Endothelial cell of umbilical vein (primary cell): ENCODE measurements at regions of chr1 and their contacts with region 1.

Region 1: GRCh38 chr1:205255941-205256780 is 28.4 kb downstream of the TMCC2 start:
- DNase-seq: peak; percentile 83
- H3K4me3 ChIP-seq: no peak overlapping the region
- H3K27ac ChIP-seq: no peak overlapping the region
- H3K4me1 ChIP-seq: peaks cover 3% of the 10 kb centered on the region
- H3K27me3 ChIP-seq: no peaks in the 10 kb centered on the region
- CTCF ChIP-seq: peak; percentile 79 to 92
- POLR2A ChIP-seq: no peak

Region 2: DNA sequence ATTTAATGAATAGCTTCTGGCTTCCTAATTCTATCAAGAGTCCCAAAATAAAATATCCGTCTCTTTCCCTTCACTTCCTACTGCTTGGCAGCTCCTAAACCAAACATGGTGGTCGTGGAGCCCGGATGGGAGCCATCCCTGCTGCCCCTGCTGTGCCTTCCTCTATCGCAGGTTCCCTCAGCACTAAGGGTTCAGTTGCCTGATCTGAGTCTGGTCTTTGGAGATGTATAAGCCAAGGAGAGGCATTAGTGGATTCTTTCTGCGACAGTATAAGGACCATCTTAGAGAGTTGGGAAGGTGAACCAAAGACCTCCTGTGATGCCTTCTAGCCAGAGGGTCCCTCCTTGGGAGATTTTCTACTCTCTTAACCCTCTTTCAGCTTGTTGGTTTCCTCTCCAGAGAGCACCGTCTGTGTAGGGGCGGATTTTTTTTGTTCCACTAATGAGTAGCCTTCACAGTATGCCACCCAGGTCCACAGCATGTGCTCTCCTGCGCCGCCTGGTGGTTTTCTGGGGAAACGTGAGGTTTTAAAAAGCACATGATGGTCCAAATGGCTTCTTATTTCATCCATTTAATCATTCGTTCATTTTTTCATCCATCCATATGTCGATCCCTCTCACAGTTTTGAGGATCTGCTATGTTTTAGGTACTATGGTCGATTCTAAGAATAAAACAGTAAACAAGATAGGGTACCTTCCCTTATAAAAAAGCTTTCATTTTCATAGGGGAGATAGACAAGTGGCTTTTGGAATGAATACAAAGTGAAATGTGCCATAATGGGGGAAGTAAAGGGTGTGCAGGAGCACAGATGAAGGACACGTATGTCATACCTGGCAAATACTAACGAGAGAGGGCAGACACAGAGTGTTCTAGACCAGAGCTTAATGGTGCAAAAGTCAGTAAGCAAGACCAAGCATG is 314.5 kb before region 1 on chr1:
- CTCF ChIA-PET with region 1: interaction called, 7 read pairs
- POLR2A ChIA-PET with region 1: no interaction called
- dilution Hi-C with region 1: no loop called
- intact Hi-C with region 1: loop called (anchors 1 kb)
- DNase-seq: peak; percentile 63
- H3K4me3 ChIP-seq: no peak overlapping the region
- H3K27ac ChIP-seq: no peak overlapping the region
- H3K4me1 ChIP-seq: no peaks in the 10 kb centered on the region
- H3K27me3 ChIP-seq: peaks cover 5 to 10% of the 10 kb centered on the region in 2 experiments
- CTCF ChIP-seq: peak; percentile 78 to 86
- POLR2A ChIP-seq: no peak

Region 3: DNA sequence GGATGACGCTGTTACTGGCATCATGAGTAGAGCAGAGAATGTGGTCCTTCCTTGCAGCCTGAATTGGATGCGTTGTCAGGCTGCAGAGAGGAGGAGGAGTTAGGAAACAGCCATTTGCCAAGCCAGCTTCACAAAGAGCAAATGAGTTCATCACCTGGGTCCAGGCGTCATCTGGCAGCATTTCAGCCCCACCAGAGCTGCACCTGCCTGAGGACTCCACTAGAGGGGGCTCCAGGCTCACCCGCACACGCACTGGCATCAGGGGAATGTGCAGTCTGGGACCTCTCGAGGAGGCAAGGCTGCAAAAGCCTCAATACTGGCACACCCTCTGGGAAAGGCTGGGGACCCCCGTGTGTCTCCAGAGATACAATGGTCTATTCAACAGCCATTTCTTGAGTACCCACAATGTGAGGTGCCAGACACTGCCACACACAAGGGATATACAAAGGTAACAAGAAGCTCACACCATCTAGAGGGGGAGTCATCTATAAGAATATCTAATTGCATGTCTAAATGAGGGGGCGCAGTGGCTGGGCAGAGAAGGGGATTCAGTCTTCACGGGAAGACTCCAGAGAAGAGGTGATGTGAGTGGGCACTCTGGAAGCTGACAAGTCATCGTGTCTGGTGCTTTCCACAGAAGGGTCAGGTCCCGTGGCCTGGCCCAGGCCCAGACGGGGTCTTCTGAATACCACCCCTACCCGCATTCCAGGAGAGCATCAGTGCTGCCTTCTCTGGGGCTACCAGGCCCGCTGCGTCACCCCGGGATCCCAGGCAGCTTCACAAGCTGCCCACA is 266.7 kb before region 1 on chr1:
- CTCF ChIA-PET with region 1: interaction called, 113 read pairs
- POLR2A ChIA-PET with region 1: no interaction called
- dilution Hi-C with region 1: no loop called
- intact Hi-C with region 1: loop called (anchors 1 kb)
- DNase-seq: peak; percentile 76
- H3K4me3 ChIP-seq: no peak overlapping the region
- H3K27ac ChIP-seq: no peak overlapping the region
- H3K4me1 ChIP-seq: no peaks in the 10 kb centered on the region
- H3K27me3 ChIP-seq: peaks cover 0 to 19% of the 10 kb centered on the region in 2 experiments
- CTCF ChIP-seq: peak; percentile 92 to 98
- POLR2A ChIP-seq: no peak

Region 4: GRCh38 chr1:205141236-205142101 is 114.7 kb before region 1 on chr1:
- CTCF ChIA-PET with region 1: interaction called, 30 read pairs
- POLR2A ChIA-PET with region 1: no interaction called
- dilution Hi-C with region 1: no loop called
- intact Hi-C with region 1: loop called (anchors 1 kb)
- DNase-seq: peak; percentile 84
- H3K4me3 ChIP-seq: no peak overlapping the region
- H3K27ac ChIP-seq: no peak overlapping the region
- H3K4me1 ChIP-seq: peaks cover 19% of the 10 kb centered on the region
- H3K27me3 ChIP-seq: no peaks in the 10 kb centered on the region
- CTCF ChIP-seq: peak; percentile 77
- POLR2A ChIP-seq: no peak

Region 5: GRCh38 chr1:205227584-205228006 is 28.6 kb before region 1 on chr1 and contains the start of gene TMCC2:
- CTCF ChIA-PET with region 1: interaction called, 50 read pairs
- POLR2A ChIA-PET with region 1: no interaction called
- dilution Hi-C with region 1: no loop called
- intact Hi-C with region 1: loop called (anchors 1 kb)
- DNase-seq: peak; percentile 81
- H3K4me3 ChIP-seq: peak within 1 kb of the TSS; percentile 49 to 64 (median 60)
- H3K27ac ChIP-seq: no peak within 1 kb of the TSS
- H3K4me1 ChIP-seq: peaks cover 17% of the 10 kb centered on the region
- H3K27me3 ChIP-seq: peaks cover 17 to 36% of the 10 kb centered on the region in 2 experiments
- CTCF ChIP-seq: peak in 1 of 2 donors; percentile 6
- POLR2A ChIP-seq: no peak
- total RNA-seq, gene TMCC2: 2.0 and 2.1 TPM in 2 replicates

Region 6: GRCh38 chr1:205273551-205273982 is 17.4 kb after region 1 on chr1:
- CTCF ChIA-PET with region 1: interaction called, 28 read pairs
- POLR2A ChIA-PET with region 1: no interaction called
- dilution Hi-C with region 1: no loop called
- intact Hi-C with region 1: no loop called
- DNase-seq: peak; percentile 69
- H3K4me3 ChIP-seq: no peak overlapping the region
- H3K27ac ChIP-seq: no peak overlapping the region
- H3K4me1 ChIP-seq: peaks cover 18% of the 10 kb centered on the region
- H3K27me3 ChIP-seq: no peaks in the 10 kb centered on the region
- CTCF ChIP-seq: peak; percentile 97 to 98
- POLR2A ChIP-seq: no peak

Region 7: GRCh38 chr1:205354259-205354904 is 98.2 kb after region 1 on chr1:
- CTCF ChIA-PET with region 1: interaction called, 11 read pairs
- POLR2A ChIA-PET with region 1: no interaction called
- dilution Hi-C with region 1: no loop called
- intact Hi-C with region 1: no loop called
- DNase-seq: peak; percentile 63
- H3K4me3 ChIP-seq: no peak overlapping the region
- H3K27ac ChIP-seq: no peak overlapping the region
- H3K4me1 ChIP-seq: no peaks in the 10 kb centered on the region
- H3K27me3 ChIP-seq: peaks cover 4 to 30% of the 10 kb centered on the region in 2 experiments
- CTCF ChIP-seq: peak; percentile 66 to 69
- POLR2A ChIP-seq: no peak